Activated naive CD4-positive, alpha-beta T cell treated with anti-CD3 and anti-CD28 coated beads for 36 hours (primary cell): ENCODE measurements at regions of chr2 and their contacts with region 1.

Region 1: GRCh38 chr2:231056453-231057424 is at the start of gene PSMD1:
- DNase-seq: peak; percentile 96
- H3K4me3 Mint-ChIP-seq: peak within 1 kb of the TSS; percentile 97
- H3K27ac Mint-ChIP-seq: peak within 1 kb of the TSS; percentile 100
- H3K4me1 Mint-ChIP-seq: peaks cover 46% of the 10 kb centered on the region
- H3K27me3 Mint-ChIP-seq: peaks cover 2% of the 10 kb centered on the region
- total RNA-seq, gene PSMD1: 106 TPM

Region 2: GRCh38 chr2:230847883-230848388 is 208.8 kb before region 1 on chr2:
- CTCF ChIA-PET with region 1: no interaction called
- intact Hi-C with region 1: loop called (anchors 5 kb)
- DNase-seq: peak; percentile 97
- H3K4me3 Mint-ChIP-seq: no peak overlapping the region
- H3K27ac Mint-ChIP-seq: peak overlapping the region; percentile 31
- H3K4me1 Mint-ChIP-seq: peaks cover 14% of the 10 kb centered on the region
- H3K27me3 Mint-ChIP-seq: peaks cover 13% of the 10 kb centered on the region

Region 3: DNA sequence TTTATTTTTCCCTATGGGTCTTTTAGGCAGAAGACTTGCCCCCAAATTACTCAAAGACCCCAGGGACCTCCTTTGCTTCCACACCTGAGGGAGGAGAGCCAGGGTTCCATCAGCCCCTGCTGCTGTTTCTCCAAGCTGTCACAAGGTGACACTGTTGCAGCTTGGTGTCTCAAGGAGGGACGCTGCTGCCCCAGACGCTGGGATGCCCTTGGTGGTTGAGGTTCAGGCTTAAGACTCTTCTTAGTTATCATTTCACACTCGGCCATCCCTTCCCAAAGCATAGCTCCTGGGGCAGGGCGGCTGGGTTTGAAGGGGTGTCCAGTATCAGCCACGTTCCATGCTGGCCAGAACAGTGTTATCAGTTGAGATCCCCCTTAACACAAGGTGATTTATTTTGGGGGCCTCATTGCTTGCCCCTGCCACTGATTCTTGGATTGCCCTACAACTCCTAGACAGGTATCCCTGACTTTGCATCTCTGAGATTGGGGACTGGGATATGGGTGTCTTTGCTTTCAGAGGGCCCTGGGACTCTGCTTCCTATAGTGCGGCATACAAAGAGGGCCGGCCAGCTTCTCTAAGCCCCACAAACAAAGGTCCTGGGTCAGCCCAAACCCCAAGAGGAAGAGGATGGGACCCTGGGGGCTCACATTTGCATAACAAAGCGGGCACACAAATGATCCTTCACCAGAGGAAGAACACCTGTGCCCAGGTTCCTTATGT is 154.4 kb before region 1 on chr2:
- CTCF ChIA-PET with region 1: interaction called, 3 read pairs
- intact Hi-C with region 1: loop called (anchors 2 kb)
- DNase-seq: peak; percentile 70
- H3K4me3 Mint-ChIP-seq: no peak overlapping the region
- H3K27ac Mint-ChIP-seq: no peak overlapping the region
- H3K4me1 Mint-ChIP-seq: peaks cover 34% of the 10 kb centered on the region
- H3K27me3 Mint-ChIP-seq: peaks cover 15% of the 10 kb centered on the region

Region 4: DNA sequence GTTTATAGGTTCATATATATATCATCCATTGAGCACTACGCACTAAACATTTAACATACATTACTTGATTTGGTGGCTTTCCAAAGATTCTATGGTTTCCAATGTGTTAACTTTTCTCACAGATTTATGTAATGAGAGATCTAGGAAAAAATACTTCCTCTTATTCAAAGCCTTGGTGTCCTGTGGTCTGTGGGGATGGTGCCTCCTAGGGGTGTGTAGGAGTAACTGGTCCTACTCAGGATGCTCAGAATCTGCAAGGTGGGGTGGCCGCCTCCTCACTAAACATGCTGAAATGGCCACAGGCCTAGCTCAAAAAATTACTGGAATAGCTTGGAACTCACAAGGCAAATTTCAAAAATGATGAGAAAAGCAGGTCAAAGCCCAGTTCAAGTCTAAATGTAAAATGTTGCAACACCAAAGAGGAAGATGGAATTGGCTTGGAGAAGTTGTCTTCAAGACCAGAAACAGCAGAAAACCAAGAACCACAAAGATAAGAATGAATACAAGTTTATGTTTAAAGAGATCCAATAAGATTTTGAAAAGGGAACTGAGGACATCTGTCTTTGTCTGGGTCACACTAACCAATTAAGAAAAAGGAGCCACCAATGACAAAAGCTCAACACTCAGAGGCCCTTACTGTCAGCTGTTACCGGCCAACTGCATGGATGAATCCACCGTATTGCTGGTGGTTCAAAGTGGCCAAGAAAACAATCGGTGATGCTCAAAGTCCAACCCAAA is 143.2 kb before region 1 on chr2:
- CTCF ChIA-PET with region 1: no interaction called
- intact Hi-C with region 1: no loop called
- DNase-seq: peak; percentile 58
- H3K4me3 Mint-ChIP-seq: no peak overlapping the region
- H3K27ac Mint-ChIP-seq: no peak overlapping the region
- H3K4me1 Mint-ChIP-seq: peaks cover 28% of the 10 kb centered on the region
- H3K27me3 Mint-ChIP-seq: peaks cover 1% of the 10 kb centered on the region

Region 5: DNA sequence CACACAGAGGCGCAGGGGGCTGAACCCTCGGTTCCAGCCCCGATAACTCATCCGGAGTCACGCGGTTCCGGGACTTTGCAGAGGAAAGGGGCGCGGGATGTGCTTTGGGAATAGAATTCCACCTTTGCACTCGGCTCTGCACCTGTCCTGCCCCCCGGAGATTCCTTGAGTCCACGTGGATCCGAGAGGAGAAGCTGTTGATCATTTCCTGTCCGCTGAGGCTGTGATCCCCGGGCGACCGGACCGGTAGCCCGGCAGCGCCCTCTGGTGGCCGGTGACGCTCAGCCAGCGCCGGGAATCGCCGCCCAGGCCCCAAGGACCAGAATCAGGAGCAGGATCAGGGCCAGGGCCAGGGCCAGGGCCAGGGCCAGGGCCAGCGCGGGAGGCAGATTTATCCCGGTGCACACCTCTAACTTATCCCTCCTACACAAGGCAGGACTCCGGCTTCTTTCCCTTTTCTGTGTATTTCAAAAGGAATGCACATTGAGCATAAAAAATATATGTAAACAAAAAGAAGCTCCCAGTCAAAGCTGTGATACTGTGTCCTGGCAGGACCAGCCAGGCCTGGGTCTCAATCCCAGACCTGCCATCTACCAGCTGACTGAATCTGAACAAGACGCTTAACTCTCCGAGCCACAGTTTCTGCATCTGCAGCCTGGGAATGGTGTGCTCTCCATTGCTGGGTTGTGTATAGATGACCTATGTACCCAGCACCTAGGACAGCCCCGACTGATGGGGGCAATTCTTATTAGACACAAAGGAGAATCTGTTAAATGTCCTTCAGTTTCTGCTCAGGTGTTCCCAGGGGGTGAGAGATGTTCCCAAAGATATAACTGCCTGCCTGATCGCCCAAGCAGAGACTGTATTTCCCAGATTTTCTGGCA is 69.4 kb before region 1 on chr2:
- CTCF ChIA-PET with region 1: interaction called, 7 read pairs
- intact Hi-C with region 1: loop called (anchors 5 kb)
- DNase-seq: peak; percentile 80
- H3K4me3 Mint-ChIP-seq: peak overlapping the region; percentile 45
- H3K27ac Mint-ChIP-seq: no peak overlapping the region
- H3K4me1 Mint-ChIP-seq: peaks cover 22% of the 10 kb centered on the region
- H3K27me3 Mint-ChIP-seq: peaks cover 21% of the 10 kb centered on the region

Region 6: DNA sequence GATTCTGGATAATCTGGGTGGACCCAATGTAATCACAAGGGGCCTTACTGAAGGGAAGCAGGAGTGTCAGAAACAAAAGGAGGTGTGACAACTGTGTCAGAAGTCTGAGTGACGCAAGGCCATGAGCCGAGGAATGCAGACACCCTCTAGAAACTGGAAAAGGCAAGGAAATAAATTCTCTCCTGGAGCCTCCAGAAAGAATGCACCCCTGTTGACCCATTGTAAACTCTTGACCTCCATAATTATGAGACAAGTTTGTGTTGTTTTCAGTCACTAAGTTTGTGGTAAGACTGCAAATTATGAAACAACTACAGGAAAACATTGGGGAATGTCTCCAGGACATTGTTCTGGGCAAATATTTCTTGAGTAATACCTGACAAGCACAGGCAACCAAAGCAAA is 291.4 kb after region 1 on chr2:
- CTCF ChIA-PET with region 1: no interaction called
- intact Hi-C with region 1: no loop called
- DNase-seq: no peak
- H3K4me3 Mint-ChIP-seq: no peak overlapping the region
- H3K27ac Mint-ChIP-seq: no peak overlapping the region
- H3K4me1 Mint-ChIP-seq: no peaks in the 10 kb centered on the region
- H3K27me3 Mint-ChIP-seq: no peaks in the 10 kb centered on the region

Region 7: DNA sequence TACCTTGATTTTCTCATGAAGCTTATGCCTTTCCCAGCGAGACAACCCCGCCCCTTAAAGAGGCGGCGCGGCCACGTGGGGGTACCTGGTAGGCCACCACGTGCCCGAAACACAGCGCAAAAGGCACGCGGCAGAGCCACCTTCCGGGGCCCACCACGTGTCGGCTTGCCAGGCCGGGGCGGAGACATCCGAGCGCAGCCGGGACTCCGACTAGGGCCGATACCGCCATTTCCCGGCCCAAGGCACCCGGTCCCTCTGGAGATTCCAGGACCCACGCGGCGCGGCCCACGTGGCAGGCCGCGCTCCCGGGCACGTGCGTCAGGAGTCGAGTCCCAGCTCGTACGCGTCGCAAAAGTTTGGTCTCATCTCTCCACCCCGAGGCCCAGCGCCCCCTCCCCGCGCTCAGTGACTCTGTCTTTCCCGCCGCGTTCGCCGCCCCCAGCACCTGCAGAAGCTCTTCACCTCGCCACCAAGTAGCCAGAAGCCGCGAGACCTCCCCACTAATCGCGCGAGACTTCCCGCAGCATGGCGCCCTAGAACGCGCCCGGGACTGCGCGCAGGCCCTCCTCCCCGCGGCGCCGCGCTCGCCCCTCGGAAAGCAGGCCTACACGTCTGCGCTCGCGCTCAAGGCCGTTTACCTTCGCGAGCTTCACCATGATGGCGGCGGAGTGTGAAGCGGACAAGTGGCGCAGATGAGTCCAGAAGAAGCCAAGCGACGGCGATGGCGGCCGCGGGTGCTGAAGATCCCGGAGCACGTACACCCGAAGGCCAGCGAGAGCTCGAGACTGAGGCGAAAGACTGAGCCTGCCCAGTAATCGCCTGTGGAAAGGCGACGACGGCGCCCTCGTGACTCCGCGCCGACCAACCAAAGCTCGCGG is 407.2 kb after region 1 on chr2 and contains the start of gene NCL:
- CTCF ChIA-PET with region 1: no interaction called
- intact Hi-C with region 1: loop called (anchors 1 kb)
- DNase-seq: peak; percentile 87
- H3K4me3 Mint-ChIP-seq: peak within 1 kb of the TSS; percentile 97
- H3K27ac Mint-ChIP-seq: peak within 1 kb of the TSS; percentile 98
- H3K4me1 Mint-ChIP-seq: peaks cover 46% of the 10 kb centered on the region
- H3K27me3 Mint-ChIP-seq: no peaks in the 10 kb centered on the region
- total RNA-seq, gene NCL: 908 to 911 TPM

Region 8: GRCh38 chr2:231706731-231707624 is 650.2 kb after region 1 on chr2:
- CTCF ChIA-PET with region 1: no interaction called
- intact Hi-C with region 1: loop called (anchors 2 kb)
- DNase-seq: peak; percentile 98
- H3K4me3 Mint-ChIP-seq: peak overlapping the region; percentile 91
- H3K27ac Mint-ChIP-seq: peak overlapping the region; percentile 100
- H3K4me1 Mint-ChIP-seq: peaks cover 18% of the 10 kb centered on the region
- H3K27me3 Mint-ChIP-seq: peaks cover 2% of the 10 kb centered on the region